CD4-positive, alpha-beta memory T cell (primary cell): ENCODE measurements at regions of chrX and their contacts with region 1.

Region 1: DNA sequence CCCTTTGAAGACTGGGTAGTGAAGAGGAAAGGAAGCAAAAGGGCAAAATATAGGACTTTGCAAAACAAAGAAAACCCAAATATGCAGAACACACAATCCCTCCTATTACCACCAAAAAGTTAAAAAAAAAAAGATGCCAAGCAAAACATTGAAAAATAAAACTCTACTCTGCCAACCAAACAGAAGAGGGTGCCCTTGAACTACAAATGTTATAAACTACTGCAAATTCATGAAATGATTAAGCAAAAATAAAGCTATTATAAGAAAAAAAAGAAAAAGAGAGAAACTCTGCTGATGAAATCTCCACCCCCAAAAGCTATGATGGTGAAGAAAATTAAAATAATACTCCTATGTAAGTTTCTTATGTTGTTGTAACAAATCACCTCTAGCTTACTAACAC is 168.5 kb upstream of the STK26 start:
- DNase-seq: peak in 4 of 5 donors; percentile 26 to 33 (median 30)
- H3K4me3 ChIP-seq: no peak overlapping the region
- H3K4me3 Mint-ChIP-seq: no peak overlapping the region
- H3K27ac ChIP-seq: no peak overlapping the region
- H3K27ac Mint-ChIP-seq: no peak overlapping the region
- H3K4me1 ChIP-seq: no peaks in the 10 kb centered on the region
- H3K4me1 Mint-ChIP-seq: no peaks in the 10 kb centered on the region
- H3K27me3 ChIP-seq: no peaks in the 10 kb centered on the region
- H3K27me3 Mint-ChIP-seq: no peaks in the 10 kb centered on the region

Region 2: GRCh38 chrX:131841496-131842410 is 12.8 kb before region 1 on chrX:
- CTCF ChIA-PET with region 1: interaction called, 10 read pairs
- POLR2A ChIA-PET with region 1: no interaction called
- intact Hi-C with region 1: no loop called
- DNase-seq: peak in 4 of 5 donors; percentile 50 to 65 (median 52)
- H3K4me3 ChIP-seq: no peak overlapping the region
- H3K4me3 Mint-ChIP-seq: peak overlapping the region in 1 of 8 donors; percentile 16
- H3K27ac ChIP-seq: no peak overlapping the region
- H3K27ac Mint-ChIP-seq: peak overlapping the region in 1 of 7 donors; percentile 12
- H3K4me1 ChIP-seq: no peaks in the 10 kb centered on the region
- H3K4me1 Mint-ChIP-seq: peaks cover 0 to 8% (median 5%) of the 10 kb centered on the region in 4 donors
- H3K27me3 ChIP-seq: no peaks in the 10 kb centered on the region
- H3K27me3 Mint-ChIP-seq: no peaks in the 10 kb centered on the region